ENCODE measurements at regions of chr7 and their contacts with region 1.

Region 1: GRCh38 chr7:44082541-44083207 is 344 bp upstream of the POLM start:
- DNase-seq: peak; percentile 98
- H3K4me3 ChIP-seq: peak overlapping the region; percentile 82
- H3K27ac ChIP-seq: peak overlapping the region; percentile 99
- H3K4me1 ChIP-seq: peaks cover 7% of the 10 kb centered on the region
- H3K27me3 ChIP-seq: no peaks in the 10 kb centered on the region
- CTCF ChIP-seq: no peak

Region 2: DNA sequence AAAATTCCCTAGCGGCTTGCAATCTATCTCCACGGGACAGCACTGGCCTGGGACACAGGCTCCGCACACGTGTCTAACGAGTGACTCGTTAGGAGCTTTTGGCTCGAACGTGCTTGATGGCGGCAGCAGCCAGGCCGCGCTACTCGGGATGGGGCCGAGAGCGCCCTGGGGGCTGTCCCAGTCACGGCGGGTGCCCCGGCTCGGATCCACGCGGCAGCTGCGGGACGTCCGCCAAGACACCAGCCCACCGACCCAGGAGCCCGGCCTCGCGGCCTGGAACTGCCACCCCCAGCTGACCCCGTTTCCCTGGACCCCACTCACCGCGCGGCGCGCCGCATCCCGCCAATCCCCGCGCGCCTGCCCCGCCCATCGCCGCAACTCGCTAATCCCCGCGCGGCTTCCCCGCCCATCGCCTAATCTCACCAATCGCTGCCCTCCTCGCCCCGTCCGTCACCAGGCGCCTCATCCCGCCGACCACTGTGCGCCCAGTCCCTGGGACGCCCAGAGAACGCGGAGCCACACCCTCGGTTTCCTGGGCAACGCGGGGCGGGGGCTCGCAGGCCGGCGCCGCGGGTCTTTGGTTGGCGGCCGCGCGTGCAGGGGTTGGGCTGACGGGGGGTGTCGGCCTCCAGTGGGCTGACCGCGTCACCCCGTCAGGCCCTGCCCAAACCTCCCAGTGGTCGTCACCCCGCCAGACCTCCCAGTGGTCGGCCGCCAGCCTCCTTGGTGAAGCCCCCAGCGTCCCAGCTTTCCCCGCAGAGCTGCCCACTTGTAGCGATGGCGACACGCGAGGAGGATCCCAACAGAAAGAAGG is 40.7 kb after region 1 on chr7 and contains the start of gene POLD2:
- intact Hi-C with region 1: loop called (anchors 5 kb)
- DNase-seq: peak; percentile 99
- H3K4me3 ChIP-seq: peak within 1 kb of the TSS; percentile 62
- H3K27ac ChIP-seq: peak within 1 kb of the TSS; percentile 61
- H3K4me1 ChIP-seq: peaks cover 7% of the 10 kb centered on the region
- H3K27me3 ChIP-seq: no peaks in the 10 kb centered on the region
- CTCF ChIP-seq: no peak
- total RNA-seq, gene POLD2: 54.8 to 161 TPM

Measured in colonic mucosa (tissue), 4 donors.